IMR-90 (cell line): ENCODE measurements at regions of chr11 and their contacts with region 1.

Region 1: DNA sequence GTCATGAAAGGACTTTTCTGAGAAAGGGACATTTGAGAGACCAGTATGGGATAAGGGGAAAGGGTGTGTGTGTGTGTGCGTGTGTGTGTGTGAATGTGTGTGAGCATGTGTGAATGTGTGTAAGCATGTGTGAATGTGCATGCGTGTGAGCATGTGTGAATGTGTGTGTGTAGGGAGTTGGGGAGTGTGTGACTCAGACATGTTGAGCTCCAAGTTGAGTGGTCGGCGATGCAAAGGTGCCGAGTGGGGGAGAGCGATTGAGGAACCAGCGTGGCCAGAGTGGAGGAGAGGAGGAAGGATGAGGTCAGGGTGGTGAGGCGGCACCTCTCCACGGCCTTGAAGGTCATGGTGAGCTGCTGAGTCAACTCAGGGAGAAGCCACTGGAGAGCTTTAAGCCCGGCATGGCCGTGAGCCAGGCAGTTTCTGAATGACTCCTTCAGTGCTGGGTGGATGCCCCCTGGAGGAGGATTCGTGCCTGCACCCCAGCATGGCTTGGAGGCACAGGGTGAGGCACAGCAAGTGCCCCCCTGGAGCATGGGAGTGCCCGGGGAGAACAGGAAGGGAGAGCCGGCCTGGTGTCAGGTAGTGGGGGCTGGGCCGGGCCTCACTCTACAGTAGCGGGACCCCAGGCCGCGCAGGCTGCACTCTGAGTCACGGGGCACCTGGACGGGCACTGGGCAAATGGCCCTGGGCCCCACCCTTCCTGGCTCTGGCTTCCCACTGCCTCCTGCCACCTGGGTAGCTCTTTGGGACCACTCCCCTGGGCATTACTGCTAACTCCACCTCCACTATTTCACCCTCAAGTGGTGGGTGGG is 8.2 kb upstream of the CCDC88B start:
- DNase-seq: peak; percentile 87
- ATAC-seq: peak; percentile 84
- H3K4me3 ChIP-seq: no peak overlapping the region
- H3K27ac ChIP-seq: no peak overlapping the region
- H3K4me1 ChIP-seq: peaks cover 7% of the 10 kb centered on the region
- H3K27me3 ChIP-seq: no peaks in the 10 kb centered on the region; the same call in 1 of the 2 replicates
- CTCF ChIP-seq: peak; percentile 69
- POLR2A ChIP-seq: no peak
- RAD21 ChIP-seq: peak; percentile 60

Region 2: GRCh38 chr11:64317957-64318693 is 13.6 kb before region 1 on chr11 and contains the start of gene PRDX5:
- CTCF ChIA-PET with region 1: interaction called, 13 read pairs
- POLR2A ChIA-PET with region 1: interaction called, 9 read pairs
- dilution Hi-C with region 1: no loop called
- in situ Hi-C with region 1: no loop called
- intact Hi-C with region 1: no loop called
- DNase-seq: peak; percentile 94
- ATAC-seq: peak; percentile 92
- H3K4me3 ChIP-seq: peak within 1 kb of the TSS; percentile 67
- H3K27ac ChIP-seq: peak within 1 kb of the TSS; percentile 79
- H3K4me1 ChIP-seq: peaks cover 6% of the 10 kb centered on the region
- H3K27me3 ChIP-seq: no peaks in the 10 kb centered on the region
- CTCF ChIP-seq: peak; percentile 48
- POLR2A ChIP-seq: peak; percentile 66
- RAD21 ChIP-seq: peak; percentile 47
- total RNA-seq, gene PRDX5: 120 and 160 TPM in 2 replicates